Gastrocnemius medialis (tissue), 4 donors: ENCODE measurements at regions of chr6 and their contacts with region 1.

Region 1: DNA sequence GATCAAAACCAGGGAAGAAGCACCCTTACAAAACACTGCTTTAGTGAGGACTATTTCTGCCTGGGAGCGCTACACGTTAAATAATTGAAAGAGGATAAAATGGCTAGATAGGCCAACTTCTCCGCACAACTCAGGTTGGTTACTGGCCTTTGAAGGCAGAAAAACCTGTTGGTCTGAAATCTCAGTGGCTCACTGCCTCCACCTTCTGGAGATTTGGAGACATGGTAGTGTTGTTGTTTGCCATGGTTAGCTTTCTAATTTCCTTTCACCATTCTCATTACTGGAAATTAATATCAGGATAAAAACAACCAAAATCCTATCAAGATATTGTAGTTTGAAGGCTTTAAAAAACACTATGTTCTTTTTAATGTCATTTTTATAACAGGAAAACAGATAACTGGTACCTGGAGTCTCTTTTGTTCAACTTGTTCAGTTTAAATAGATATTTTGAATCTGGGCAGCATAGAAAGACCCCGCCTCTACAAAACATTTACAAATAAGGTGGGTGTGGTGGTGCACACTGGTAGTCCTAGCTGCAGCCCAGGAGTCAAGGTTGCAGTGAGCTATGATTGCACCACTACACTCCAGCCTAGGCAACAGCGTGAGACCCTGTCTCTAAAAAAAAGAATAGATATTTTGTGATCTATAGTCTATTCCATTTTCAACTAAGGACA is 27.5 kb upstream of the BCLAF1 start:
- DNase-seq: peak in 1 of 2 donors; percentile 23
- ATAC-seq: peak; percentile 85 to 92
- H3K4me3 ChIP-seq: no peak overlapping the region
- H3K27ac ChIP-seq: no peak overlapping the region
- H3K4me1 ChIP-seq: no peaks in the 10 kb centered on the region
- H3K27me3 ChIP-seq: no peaks in the 10 kb centered on the region
- CTCF ChIP-seq: peak; percentile 50 to 84 (median 69)
- POLR2A ChIP-seq: no peak

Region 2: DNA sequence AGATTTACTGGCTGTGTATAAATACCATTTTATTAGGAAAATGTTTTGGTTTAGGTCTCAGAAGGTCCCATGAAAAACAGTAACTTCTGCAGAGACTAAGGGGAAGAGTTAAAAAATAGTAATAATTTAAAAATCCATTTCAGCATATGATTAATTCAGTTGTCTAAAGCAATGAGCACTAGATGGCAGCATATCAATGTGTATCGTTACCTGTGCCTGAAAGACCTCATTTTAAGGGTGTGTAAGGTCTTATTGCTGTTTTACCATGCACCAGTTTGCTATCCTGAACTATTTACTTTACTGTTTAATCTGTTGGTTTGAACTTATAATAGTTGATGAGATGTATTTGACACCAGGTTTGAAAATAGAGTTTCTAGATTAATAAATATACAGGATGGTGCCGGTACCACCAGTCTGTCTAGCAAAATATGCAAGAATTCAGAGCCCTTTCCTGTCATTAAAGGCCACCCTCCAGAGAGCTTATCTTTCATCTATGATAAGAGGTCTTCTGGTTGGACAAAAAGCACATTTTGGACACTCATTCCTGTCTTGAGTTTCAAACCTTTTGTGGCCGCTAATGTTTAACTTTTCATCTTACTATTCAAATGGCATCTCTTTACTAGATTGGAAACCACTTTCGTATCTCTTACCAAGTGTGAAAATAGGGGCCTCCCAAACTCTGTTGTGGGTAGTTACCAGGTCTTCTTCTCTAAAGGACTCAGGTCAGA is 810.7 kb before region 1 on chr6:
- in situ Hi-C with region 1: no loop called
- intact Hi-C with region 1: loop called (anchors 2 kb)
- DNase-seq: no peak
- ATAC-seq: no peak
- H3K4me3 ChIP-seq: no peak overlapping the region
- H3K27ac ChIP-seq: no peak overlapping the region
- H3K4me1 ChIP-seq: no peaks in the 10 kb centered on the region
- H3K27me3 ChIP-seq: no peaks in the 10 kb centered on the region
- CTCF ChIP-seq: peak; percentile 9 to 59 (median 33)
- POLR2A ChIP-seq: no peak

Region 3: GRCh38 chr6:136226027-136226673 is 91.0 kb before region 1 on chr6:
- in situ Hi-C with region 1: no loop called
- intact Hi-C with region 1: no loop called
- DNase-seq: peak; percentile 24 to 29
- ATAC-seq: peak; percentile 85 to 86
- H3K4me3 ChIP-seq: peak overlapping the region; percentile 26 to 46 (median 34)
- H3K27ac ChIP-seq: peak overlapping the region in 2 of 4 donors; percentile 5 to 44
- H3K4me1 ChIP-seq: no peaks in the 10 kb centered on the region
- H3K27me3 ChIP-seq: no peaks in the 10 kb centered on the region
- CTCF ChIP-seq: peak; percentile 97 to 100 (median 100)
- POLR2A ChIP-seq: no peak

Region 4: GRCh38 chr6:136249811-136250685 is 67.1 kb before region 1 on chr6 and contains the start of gene MTFR2:
- in situ Hi-C with region 1: no loop called
- intact Hi-C with region 1: loop called (anchors 2 kb)
- DNase-seq: peak; percentile 97
- ATAC-seq: peak; percentile 100
- H3K4me3 ChIP-seq: peak within 1 kb of the TSS; percentile 73 to 81 (median 74)
- H3K27ac ChIP-seq: peak within 1 kb of the TSS; percentile 71 to 78 (median 76)
- H3K4me1 ChIP-seq: peaks cover 16 to 22% of the 10 kb centered on the region in 2 donors
- H3K27me3 ChIP-seq: no peaks in the 10 kb centered on the region
- CTCF ChIP-seq: no peak
- POLR2A ChIP-seq: peak; percentile 14 to 61
- total RNA-seq, gene MTFR2: 0.51 TPM in 1 of 4 donors, not detected in the others